Aorta (tissue), 5 donors: ENCODE measurements at regions of chr17 and their contacts with region 1.

Region 1: GRCh38 chr17:29622337-29623282 is at the start of gene CORO6:
- DNase-seq: peak in 1 of 2 donors; percentile 88
- ATAC-seq: peak; percentile 86
- H3K4me3 ChIP-seq: peak within 1 kb of the TSS; percentile 51 to 65
- H3K27ac ChIP-seq: peak within 1 kb of the TSS in 1 of 2 donors; percentile 28
- H3K4me1 ChIP-seq: no peaks in the 10 kb centered on the region
- H3K27me3 ChIP-seq: no peaks in the 10 kb centered on the region
- total RNA-seq, gene CORO6: 9.9 to 12.3 TPM

Region 2: DNA sequence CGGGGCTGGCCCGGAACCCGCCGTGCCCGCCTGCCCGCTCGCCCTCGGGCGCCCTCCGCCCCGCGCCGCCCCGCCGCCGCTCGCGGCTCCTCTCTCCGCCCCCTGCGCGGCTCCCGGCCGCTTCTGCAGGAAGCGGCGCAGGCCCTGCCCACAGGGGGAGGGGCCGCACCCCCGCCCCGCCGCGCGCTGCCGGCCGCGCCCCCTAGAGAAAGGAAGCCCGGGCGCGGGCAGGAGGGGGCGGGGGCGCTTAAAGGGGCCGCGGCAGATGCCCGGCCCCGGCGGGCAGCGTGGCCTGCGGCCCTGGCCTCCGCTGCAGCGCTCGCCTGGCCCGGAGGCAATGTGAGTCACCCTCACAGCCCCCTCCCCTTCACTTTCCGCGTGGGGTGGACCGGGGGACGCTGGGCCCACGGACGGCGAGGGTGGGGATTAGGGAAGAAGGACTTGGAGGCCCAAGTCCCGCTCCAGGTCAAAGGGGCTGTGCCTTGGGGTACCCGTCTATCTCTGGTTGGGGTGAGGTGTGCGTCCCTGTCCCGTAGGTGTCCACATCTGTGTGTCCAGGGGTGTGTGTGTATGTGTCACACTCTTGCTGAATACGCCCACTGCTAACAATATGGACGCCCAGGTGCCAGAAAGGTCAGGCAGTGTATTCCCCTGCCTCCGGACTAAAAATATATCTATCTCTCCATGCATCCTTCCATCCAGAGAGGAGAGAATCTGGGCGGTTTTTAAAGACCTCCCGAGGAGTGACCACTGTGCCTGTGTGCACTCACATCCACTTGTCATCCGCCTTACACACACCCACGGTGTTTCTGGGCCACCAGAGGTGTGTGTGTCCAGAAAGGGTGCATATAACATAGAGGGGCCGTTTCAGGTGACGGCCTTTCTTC is 32.8 kb before region 1 on chr17 and contains the start of gene GIT1:
- intact Hi-C with region 1: loop called in 1 of 2 experiments (anchors 5 kb)
- DNase-seq: peak; percentile 91 to 93
- ATAC-seq: peak; percentile 83
- H3K4me3 ChIP-seq: peak within 1 kb of the TSS; percentile 29 to 73
- H3K27ac ChIP-seq: peak within 1 kb of the TSS in 1 of 2 donors; percentile 37
- H3K4me1 ChIP-seq: peaks cover 0 to 2% of the 10 kb centered on the region in 2 donors
- H3K27me3 ChIP-seq: no peaks in the 10 kb centered on the region
- total RNA-seq, gene GIT1: 38.5 to 47.0 TPM